CD8-positive, alpha-beta memory T cell (primary cell): ENCODE measurements at regions of chr22 and their contacts with region 1.

Region 1: GRCh38 chr22:42614312-42615091 is at the start of gene POLDIP3:
- DNase-seq: peak; percentile 98 to 100 (median 99)
- H3K4me3 ChIP-seq: peak within 1 kb of the TSS; percentile 63
- H3K4me3 Mint-ChIP-seq: peak within 1 kb of the TSS; percentile 82 to 99 (median 96)
- H3K27ac ChIP-seq: peak within 1 kb of the TSS; percentile 99
- H3K27ac Mint-ChIP-seq: peak within 1 kb of the TSS; percentile 99 to 100 (median 100)
- H3K4me1 ChIP-seq: peaks cover 49% of the 10 kb centered on the region
- H3K4me1 Mint-ChIP-seq: peaks cover 49 to 65% (median 57%) of the 10 kb centered on the region in 3 donors
- H3K27me3 ChIP-seq: no peaks in the 10 kb centered on the region
- H3K27me3 Mint-ChIP-seq: no peaks in the 10 kb centered on the region
- total RNA-seq, gene POLDIP3: 80.0 to 82.8 TPM

Region 2: DNA sequence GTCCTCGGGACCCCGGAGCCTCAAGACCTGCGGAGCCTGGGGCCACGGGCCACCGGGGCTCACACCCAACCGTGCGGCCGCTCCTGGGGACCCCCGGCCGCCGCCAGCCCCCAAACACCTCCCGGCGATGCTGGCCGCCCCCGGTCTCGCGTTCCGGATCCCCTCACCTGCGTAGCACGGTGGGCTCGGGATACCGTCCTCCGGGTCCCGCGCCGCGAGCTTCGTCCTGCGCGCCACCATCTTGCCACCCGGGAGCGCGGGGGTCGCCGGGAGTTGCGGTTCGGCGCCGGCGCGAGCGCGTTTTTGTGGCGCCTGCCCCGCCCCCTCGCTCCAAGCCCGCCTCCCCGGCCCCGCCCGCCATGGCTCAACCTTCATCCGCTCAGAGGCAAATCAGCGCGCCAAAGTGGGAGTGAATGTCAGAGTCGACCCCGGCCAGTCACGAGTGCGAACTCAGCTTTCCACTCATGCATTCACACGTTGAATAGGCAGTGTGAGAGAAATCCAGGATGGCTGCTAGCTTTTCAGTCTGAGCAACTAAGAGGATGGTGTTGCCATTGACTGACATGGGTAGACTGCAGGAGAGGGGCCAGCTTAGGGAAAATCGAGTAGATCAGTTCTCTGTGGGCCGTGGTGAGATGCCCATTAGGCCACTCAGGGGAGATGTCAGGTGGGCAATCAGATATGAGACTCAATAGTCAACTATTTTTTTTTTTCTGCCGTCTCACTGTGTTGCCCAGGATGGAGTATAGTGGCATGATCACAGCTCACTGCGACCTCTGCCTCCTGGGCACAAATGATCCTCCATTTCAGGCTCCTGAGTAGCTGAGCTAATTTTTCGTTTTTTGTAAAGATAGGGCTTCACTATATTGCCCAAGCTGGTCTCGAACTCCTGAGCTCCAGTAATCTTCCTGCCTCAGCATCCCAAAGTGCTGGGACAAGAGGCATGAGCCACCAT is 32.5 kb before region 1 on chr22:
- CTCF ChIA-PET with region 1: no interaction called
- POLR2A ChIA-PET with region 1: interaction called, 14 read pairs
- DNase-seq: peak; percentile 73 to 84 (median 79)
- H3K4me3 ChIP-seq: peak overlapping the region; percentile 25
- H3K4me3 Mint-ChIP-seq: peak overlapping the region; percentile 93 to 99 (median 96)
- H3K27ac ChIP-seq: peak overlapping the region; percentile 64
- H3K27ac Mint-ChIP-seq: peak overlapping the region; percentile 76 to 97 (median 91)
- H3K4me1 ChIP-seq: peaks cover 9% of the 10 kb centered on the region
- H3K4me1 Mint-ChIP-seq: peaks cover 13 to 16% (median 15%) of the 10 kb centered on the region in 3 donors
- H3K27me3 ChIP-seq: no peaks in the 10 kb centered on the region
- H3K27me3 Mint-ChIP-seq: no peaks in the 10 kb centered on the region

Region 3: GRCh38 chr22:42649246-42650099 is 35.0 kb after region 1 on chr22 and contains the start of gene CYB5R3:
- CTCF ChIA-PET with region 1: no interaction called
- POLR2A ChIA-PET with region 1: interaction called, 47 read pairs
- DNase-seq: peak; percentile 67 to 81 (median 74)
- H3K4me3 ChIP-seq: peak within 1 kb of the TSS; percentile 87
- H3K4me3 Mint-ChIP-seq: peak within 1 kb of the TSS; percentile 97 to 100 (median 98)
- H3K27ac ChIP-seq: peak within 1 kb of the TSS; percentile 88
- H3K27ac Mint-ChIP-seq: peak within 1 kb of the TSS; percentile 90 to 100 (median 99)
- H3K4me1 ChIP-seq: peaks cover 33% of the 10 kb centered on the region
- H3K4me1 Mint-ChIP-seq: peaks cover 14 to 46% (median 23%) of the 10 kb centered on the region in 3 donors
- H3K27me3 ChIP-seq: no peaks in the 10 kb centered on the region
- H3K27me3 Mint-ChIP-seq: peaks cover 0 to 6% of the 10 kb centered on the region in 2 donors
- total RNA-seq, gene CYB5R3: 70.9 to 75.1 TPM